ENCODE measurements at regions of chr10 and their contacts with region 1.

Region 1: GRCh38 chr10:113199459-113199858 is 249.4 kb downstream of the TCF7L2 start:
- DNase-seq: peak; percentile 37
- H3K4me3 ChIP-seq: no peak overlapping the region
- H3K27me3 ChIP-seq: no peaks in the 10 kb centered on the region
- CTCF ChIP-seq: no peak

Region 2: DNA sequence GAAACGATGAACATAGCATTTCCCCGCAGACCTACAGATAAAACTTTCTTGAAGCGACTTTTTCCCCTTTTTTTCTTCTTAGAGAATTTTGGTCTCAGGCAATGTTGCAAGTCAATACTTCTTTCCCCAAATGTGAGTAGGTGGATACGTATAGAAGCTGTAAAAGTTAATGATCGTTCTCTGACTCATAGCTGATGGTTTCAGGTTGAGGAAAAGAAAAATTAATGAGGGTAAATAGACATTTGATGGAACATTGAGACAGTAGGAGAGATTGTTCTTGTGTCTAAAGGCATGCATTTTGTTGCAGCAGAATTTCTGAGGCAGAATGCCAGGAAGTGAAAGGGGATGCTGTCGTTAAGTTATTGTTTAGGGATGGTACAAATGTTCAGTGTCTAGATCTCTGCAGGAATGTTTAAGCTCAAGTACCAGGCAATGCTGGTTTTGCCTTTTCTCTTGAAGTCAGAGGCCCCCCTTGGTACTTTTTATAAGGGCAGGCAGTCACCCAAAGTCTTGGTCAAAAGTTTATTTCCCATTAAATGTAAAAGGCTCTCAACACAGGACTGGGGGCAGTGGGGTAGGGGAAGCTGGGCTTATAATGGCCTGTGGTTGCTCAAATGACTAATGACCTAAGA is 240.1 kb before region 1 on chr10:
- CTCF ChIA-PET with region 1: no interaction called
- POLR2A ChIA-PET with region 1: interaction called, 12 read pairs
- DNase-seq: no peak
- H3K4me3 ChIP-seq: no peak overlapping the region
- H3K27me3 ChIP-seq: no peaks in the 10 kb centered on the region
- CTCF ChIP-seq: no peak

Region 3: GRCh38 chr10:113035791-113036190 is 163.7 kb before region 1 on chr10:
- CTCF ChIA-PET with region 1: no interaction called
- POLR2A ChIA-PET with region 1: no interaction called
- DNase-seq: no peak
- H3K4me3 ChIP-seq: no peak overlapping the region
- H3K27me3 ChIP-seq: no peaks in the 10 kb centered on the region
- CTCF ChIP-seq: no peak

Region 4: DNA sequence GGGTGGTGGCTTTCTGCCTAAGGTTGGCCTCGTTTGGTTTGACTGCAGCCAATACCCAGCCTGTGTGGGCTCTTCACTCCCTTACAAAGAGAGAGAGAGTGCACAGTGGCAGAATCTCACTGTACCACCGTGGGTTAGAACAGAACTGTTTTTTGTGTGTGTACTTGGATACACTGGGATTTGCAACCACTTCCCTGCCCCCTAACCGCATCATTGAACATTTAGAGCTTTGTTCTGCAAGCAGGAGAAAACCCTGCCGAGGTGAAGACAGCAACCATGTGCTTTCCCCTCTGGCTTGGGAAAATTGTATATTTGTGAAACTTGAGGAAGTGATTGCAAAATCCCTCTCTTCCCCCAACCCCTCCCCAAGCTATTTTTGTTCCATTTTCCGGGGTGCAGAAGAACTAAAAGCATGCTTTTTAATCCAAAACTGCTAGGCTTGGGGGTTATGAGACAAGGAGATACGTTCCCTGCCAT is 48.2 kb before region 1 on chr10:
- CTCF ChIA-PET with region 1: no interaction called
- POLR2A ChIA-PET with region 1: interaction called, 13 read pairs
- DNase-seq: no peak
- H3K4me3 ChIP-seq: no peak overlapping the region
- H3K27me3 ChIP-seq: no peaks in the 10 kb centered on the region
- CTCF ChIP-seq: no peak

Region 5: GRCh38 chr10:113169853-113170460 is 29.5 kb before region 1 on chr10:
- CTCF ChIA-PET with region 1: no interaction called
- POLR2A ChIA-PET with region 1: no interaction called
- DNase-seq: no peak
- H3K4me3 ChIP-seq: no peak overlapping the region
- H3K27me3 ChIP-seq: no peaks in the 10 kb centered on the region
- CTCF ChIP-seq: no peak

Region 6: DNA sequence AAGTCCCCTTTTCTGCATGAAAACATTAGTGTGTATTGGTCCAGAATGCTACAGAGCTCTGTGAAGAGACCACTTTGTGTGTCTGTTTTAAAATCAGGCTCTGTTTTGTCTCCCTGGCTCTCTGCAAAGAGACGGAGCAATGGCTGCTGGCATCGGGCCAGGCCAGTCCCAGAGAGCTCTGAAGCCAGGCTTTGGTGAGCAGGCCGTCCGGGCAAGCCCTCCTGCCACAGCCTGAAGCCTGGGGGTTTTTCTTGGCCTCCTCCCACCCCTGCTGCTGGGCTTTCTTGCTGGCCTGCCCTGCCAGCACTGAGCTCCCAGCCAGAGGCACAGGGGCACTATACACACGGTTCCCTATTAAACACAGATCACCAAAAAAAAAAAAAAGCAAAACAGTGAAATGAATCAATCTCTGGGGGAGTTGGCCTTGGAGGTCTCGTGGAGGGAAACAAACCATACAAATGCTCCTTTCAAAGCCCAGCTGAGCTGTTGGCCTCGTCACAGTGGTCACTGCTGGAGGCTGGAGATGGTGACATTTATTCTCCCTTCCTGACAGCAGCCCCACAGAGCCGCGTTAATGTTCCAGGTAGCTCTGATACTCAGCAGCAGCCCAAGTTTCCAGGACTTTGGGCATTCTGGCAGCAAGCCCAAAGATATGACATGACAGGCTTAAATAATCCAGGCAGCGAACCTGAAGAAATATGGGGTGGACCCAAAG is 12.2 kb before region 1 on chr10:
- CTCF ChIA-PET with region 1: no interaction called
- POLR2A ChIA-PET with region 1: no interaction called
- DNase-seq: no peak
- H3K4me3 ChIP-seq: no peak overlapping the region
- H3K27me3 ChIP-seq: peaks cover 5% of the 10 kb centered on the region
- CTCF ChIP-seq: no peak